ENCODE measurements at regions of chr3 and their contacts with region 1.

Region 1: GRCh38 chr3:65483480-65483879 is 555.2 kb downstream of the MAGI1 start:
- DNase-seq: peak; percentile 53 to 60
- ATAC-seq: peak; percentile 75 to 86
- H3K4me3 ChIP-seq: peak overlapping the region in 1 of 4 donors; percentile 14
- H3K27ac ChIP-seq: peak overlapping the region; percentile 69 to 80 (median 76)
- H3K4me1 ChIP-seq: peaks cover 60 to 61% of the 10 kb centered on the region in 2 donors
- H3K27me3 ChIP-seq: no peaks in the 10 kb centered on the region
- CTCF ChIP-seq: no peak
- POLR2A ChIP-seq: no peak

Region 2: DNA sequence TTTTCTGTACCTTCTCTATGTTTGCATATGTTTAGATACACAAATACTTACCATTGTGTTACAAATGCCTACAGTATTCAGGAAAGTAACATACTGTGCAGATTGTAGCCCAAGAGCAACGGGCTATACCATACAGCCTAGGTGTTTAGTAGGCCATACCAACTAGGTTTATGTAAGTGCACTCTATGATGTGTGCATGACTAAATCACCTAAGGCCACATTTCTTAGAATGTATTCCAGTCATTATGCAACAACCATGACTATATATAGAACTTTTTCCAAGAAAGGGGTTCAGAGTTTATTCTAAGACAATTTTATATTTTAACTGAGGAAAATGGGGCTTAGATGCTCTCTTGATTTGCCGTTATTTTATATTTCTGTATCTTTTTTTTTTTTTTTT is 143.6 kb after region 1 on chr3:
- in situ Hi-C with region 1: no loop called
- intact Hi-C with region 1: loop called (anchors 10 kb)
- DNase-seq: no peak
- ATAC-seq: no peak
- H3K4me3 ChIP-seq: no peak overlapping the region
- H3K27ac ChIP-seq: peak overlapping the region in 1 of 4 donors; percentile 75
- H3K4me1 ChIP-seq: peaks cover 17 to 29% of the 10 kb centered on the region in 2 donors
- H3K27me3 ChIP-seq: no peaks in the 10 kb centered on the region
- CTCF ChIP-seq: no peak
- POLR2A ChIP-seq: no peak